ENCODE measurements at regions of chr17 and their contacts with region 1.

Region 1: GRCh38 chr17:82781894-82782274 is 30.0 kb downstream of the TBCD start:
- DNase-seq: peak; percentile 79 to 85 (median 82)
- H3K4me3 ChIP-seq: no peak overlapping the region
- H3K4me3 Mint-ChIP-seq: no peak overlapping the region
- H3K27ac ChIP-seq: no peak overlapping the region
- H3K27ac Mint-ChIP-seq: peak overlapping the region in 4 of 7 donors; percentile 63 to 72 (median 70)
- H3K4me1 ChIP-seq: peaks cover 5% of the 10 kb centered on the region
- H3K4me1 Mint-ChIP-seq: peaks cover 5 to 16% (median 11%) of the 10 kb centered on the region in 4 donors
- H3K27me3 ChIP-seq: no peaks in the 10 kb centered on the region
- H3K27me3 Mint-ChIP-seq: no peaks in the 10 kb centered on the region

Region 2: GRCh38 chr17:82863941-82864774 is 82.3 kb after region 1 on chr17:
- CTCF ChIA-PET with region 1: interaction called, 11 read pairs
- POLR2A ChIA-PET with region 1: interaction called, 5 read pairs
- intact Hi-C with region 1: loop called (anchors 1 kb)
- DNase-seq: peak; percentile 89 to 97 (median 90)
- H3K4me3 ChIP-seq: peak overlapping the region in 1 of 2 donors; percentile 34
- H3K4me3 Mint-ChIP-seq: peak overlapping the region; percentile 70 to 84 (median 81)
- H3K27ac ChIP-seq: peak overlapping the region; percentile 74
- H3K27ac Mint-ChIP-seq: peak overlapping the region; percentile 89 to 98 (median 96)
- H3K4me1 ChIP-seq: peaks cover 88% of the 10 kb centered on the region
- H3K4me1 Mint-ChIP-seq: peaks cover 42 to 92% (median 57%) of the 10 kb centered on the region in 4 donors
- H3K27me3 ChIP-seq: no peaks in the 10 kb centered on the region
- H3K27me3 Mint-ChIP-seq: no peaks in the 10 kb centered on the region

Region 3: GRCh38 chr17:82882715-82883418 is 101.0 kb after region 1 on chr17:
- CTCF ChIA-PET with region 1: interaction called, 20 read pairs
- POLR2A ChIA-PET with region 1: no interaction called
- intact Hi-C with region 1: no loop called
- DNase-seq: peak; percentile 82 to 93 (median 84)
- H3K4me3 ChIP-seq: peak overlapping the region in 1 of 2 donors; percentile 51
- H3K4me3 Mint-ChIP-seq: peak overlapping the region; percentile 80 to 95 (median 92)
- H3K27ac ChIP-seq: peak overlapping the region; percentile 67
- H3K27ac Mint-ChIP-seq: peak overlapping the region; percentile 98 to 100 (median 99)
- H3K4me1 ChIP-seq: peaks cover 56% of the 10 kb centered on the region
- H3K4me1 Mint-ChIP-seq: peaks cover 57 to 94% (median 78%) of the 10 kb centered on the region in 4 donors
- H3K27me3 ChIP-seq: no peaks in the 10 kb centered on the region
- H3K27me3 Mint-ChIP-seq: no peaks in the 10 kb centered on the region

Region 4: GRCh38 chr17:82892899-82893565 is 111.1 kb after region 1 on chr17:
- CTCF ChIA-PET with region 1: interaction called, 4 read pairs
- POLR2A ChIA-PET with region 1: no interaction called
- intact Hi-C with region 1: loop called (anchors 1 kb)
- DNase-seq: peak; percentile 74 to 91 (median 78)
- H3K4me3 ChIP-seq: no peak overlapping the region
- H3K4me3 Mint-ChIP-seq: peak overlapping the region in 7 of 8 donors; percentile 7 to 82 (median 72)
- H3K27ac ChIP-seq: peak overlapping the region; percentile 17
- H3K27ac Mint-ChIP-seq: peak overlapping the region; percentile 88 to 99 (median 95)
- H3K4me1 ChIP-seq: peaks cover 25% of the 10 kb centered on the region
- H3K4me1 Mint-ChIP-seq: peaks cover 13 to 45% (median 29%) of the 10 kb centered on the region in 4 donors
- H3K27me3 ChIP-seq: no peaks in the 10 kb centered on the region
- H3K27me3 Mint-ChIP-seq: no peaks in the 10 kb centered on the region

Region 5: DNA sequence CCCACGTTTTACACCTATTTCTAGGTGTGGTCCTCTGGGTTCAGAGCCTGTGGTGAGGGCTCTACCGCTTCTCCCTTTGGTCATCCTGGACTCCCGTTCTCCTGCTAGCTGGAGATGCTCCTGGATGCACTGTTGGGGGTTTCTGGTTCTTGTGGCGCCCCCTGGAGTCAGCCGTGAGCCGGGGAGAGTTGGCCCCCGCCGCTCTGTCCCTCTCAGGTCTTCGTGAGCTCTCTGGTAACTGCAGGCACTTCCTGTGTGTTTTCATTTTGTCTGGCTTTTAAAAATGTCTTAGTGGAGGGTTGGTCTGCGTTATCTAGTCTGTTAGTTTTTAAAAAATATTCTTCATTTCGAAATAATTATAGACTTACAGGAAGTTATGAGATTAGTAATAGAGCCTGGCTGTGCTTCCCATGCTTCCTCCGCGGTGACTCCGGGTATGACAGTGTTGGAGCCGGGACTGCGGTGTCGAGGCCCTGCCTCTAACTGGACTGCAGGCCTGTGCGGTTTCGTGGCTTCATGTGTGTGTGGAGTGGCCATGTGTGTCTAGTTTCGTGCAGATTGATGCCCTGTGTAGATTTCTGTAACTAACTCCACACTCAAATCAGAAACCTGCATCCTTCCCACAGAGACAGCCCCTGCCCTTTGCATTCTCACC is 135.9 kb after region 1 on chr17:
- CTCF ChIA-PET with region 1: interaction called, 15 read pairs
- POLR2A ChIA-PET with region 1: no interaction called
- intact Hi-C with region 1: loop called (anchors 1 kb)
- DNase-seq: peak in 1 of 5 donors; percentile 21
- H3K4me3 ChIP-seq: no peak overlapping the region
- H3K4me3 Mint-ChIP-seq: no peak overlapping the region
- H3K27ac ChIP-seq: no peak overlapping the region
- H3K27ac Mint-ChIP-seq: peak overlapping the region in 1 of 7 donors; percentile 52
- H3K4me1 ChIP-seq: no peaks in the 10 kb centered on the region
- H3K4me1 Mint-ChIP-seq: peaks cover 0 to 6% (median 3%) of the 10 kb centered on the region in 4 donors
- H3K27me3 ChIP-seq: no peaks in the 10 kb centered on the region
- H3K27me3 Mint-ChIP-seq: no peaks in the 10 kb centered on the region

Region 6: GRCh38 chr17:82932518-82933310 is 150.8 kb after region 1 on chr17:
- CTCF ChIA-PET with region 1: interaction called, 10 read pairs
- POLR2A ChIA-PET with region 1: no interaction called
- intact Hi-C with region 1: no loop called
- DNase-seq: no peak
- H3K4me3 ChIP-seq: no peak overlapping the region
- H3K4me3 Mint-ChIP-seq: no peak overlapping the region
- H3K27ac ChIP-seq: no peak overlapping the region
- H3K27ac Mint-ChIP-seq: no peak overlapping the region
- H3K4me1 ChIP-seq: no peaks in the 10 kb centered on the region
- H3K4me1 Mint-ChIP-seq: no peaks in the 10 kb centered on the region
- H3K27me3 ChIP-seq: no peaks in the 10 kb centered on the region
- H3K27me3 Mint-ChIP-seq: no peaks in the 10 kb centered on the region

Region 7: DNA sequence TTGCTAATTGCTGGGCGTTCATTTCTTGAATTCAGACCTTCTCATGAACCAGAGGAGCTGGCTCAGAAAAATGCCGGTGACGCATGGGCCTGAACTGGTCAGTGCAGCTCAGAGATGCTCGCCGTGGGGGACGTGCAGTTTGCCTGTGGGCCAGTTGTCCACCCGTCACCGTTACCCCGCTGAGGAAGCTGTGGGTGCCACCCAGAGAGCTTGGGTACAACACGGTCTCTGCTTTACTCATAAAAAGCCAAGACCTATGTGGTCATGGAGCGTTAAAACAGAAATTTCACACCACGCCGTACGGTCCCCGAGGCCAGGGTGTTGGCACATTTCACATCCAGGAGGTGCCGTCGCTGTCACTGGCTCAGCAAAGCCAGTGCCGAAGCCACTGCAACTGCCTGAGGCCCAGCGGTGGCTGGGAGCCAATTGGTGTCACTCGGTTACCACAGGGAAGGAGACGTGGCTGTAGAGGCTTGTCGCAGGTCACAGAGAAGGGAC is 418.4 kb after region 1 on chr17:
- CTCF ChIA-PET with region 1: interaction called, 11 read pairs
- POLR2A ChIA-PET with region 1: no interaction called
- intact Hi-C with region 1: no loop called
- DNase-seq: peak; percentile 43 to 75 (median 46)
- H3K4me3 ChIP-seq: peak overlapping the region in 1 of 2 donors; percentile 52
- H3K4me3 Mint-ChIP-seq: peak overlapping the region; percentile 77 to 94 (median 84)
- H3K27ac ChIP-seq: peak overlapping the region; percentile 42
- H3K27ac Mint-ChIP-seq: peak overlapping the region; percentile 77 to 92 (median 88)
- H3K4me1 ChIP-seq: peaks cover 32% of the 10 kb centered on the region
- H3K4me1 Mint-ChIP-seq: peaks cover 19 to 50% (median 30%) of the 10 kb centered on the region in 4 donors
- H3K27me3 ChIP-seq: no peaks in the 10 kb centered on the region
- H3K27me3 Mint-ChIP-seq: no peaks in the 10 kb centered on the region

Measured in CD4-positive, alpha-beta memory T cell (primary cell).